ENCODE measurements at regions of chr9 and their contacts with region 1.

Region 1: DNA sequence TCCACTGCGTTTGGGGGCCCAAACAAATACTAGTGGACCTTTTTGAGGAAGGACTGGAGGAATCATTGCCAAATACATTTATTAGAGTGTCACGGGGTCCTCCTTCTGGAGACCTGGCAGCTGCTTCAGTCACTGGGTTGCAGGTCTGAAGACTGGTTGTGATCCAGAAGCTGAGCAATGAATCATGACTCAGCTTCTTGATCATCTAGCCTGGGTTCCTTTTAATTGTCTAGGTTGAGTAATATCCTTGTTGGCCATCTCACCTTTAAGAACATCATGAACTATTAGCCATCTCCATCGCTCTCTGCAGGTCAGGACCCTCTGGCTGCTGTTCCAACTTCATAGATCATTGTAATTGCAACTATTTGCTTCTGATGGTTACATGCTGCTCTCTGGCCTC is 15.4 kb upstream of the UBAP1 start:
- DNase-seq: no peak
- ATAC-seq: no peak
- H3K4me3 ChIP-seq: no peak overlapping the region
- H3K4me3 Mint-ChIP-seq: no peak overlapping the region
- H3K27ac ChIP-seq: no peak overlapping the region
- H3K27ac Mint-ChIP-seq: no peak overlapping the region
- H3K4me1 ChIP-seq: no peaks in the 10 kb centered on the region
- H3K4me1 Mint-ChIP-seq: no peaks in the 10 kb centered on the region
- H3K27me3 ChIP-seq: no peaks in the 10 kb centered on the region
- H3K27me3 Mint-ChIP-seq: no peaks in the 10 kb centered on the region

Region 2: GRCh38 chr9:34190996-34191892 is 27.8 kb after region 1 on chr9:
- CTCF ChIA-PET with region 1: no interaction called
- POLR2A ChIA-PET with region 1: interaction called in 1 of 2 experiments, 11 read pairs
- DNase-seq: peak in 1 of 35 experiments; percentile 21
- ATAC-seq: no peak
- H3K4me3 ChIP-seq: no peak overlapping the region
- H3K4me3 Mint-ChIP-seq: no peak overlapping the region
- H3K27ac ChIP-seq: no peak overlapping the region
- H3K27ac Mint-ChIP-seq: peak overlapping the region; percentile 61 to 76
- H3K4me1 ChIP-seq: peaks cover 16 to 31% of the 10 kb centered on the region in 2 experiments
- H3K4me1 Mint-ChIP-seq: peaks cover 54 to 68% (median 60%) of the 10 kb centered on the region in 3 donors
- H3K27me3 ChIP-seq: no peaks in the 10 kb centered on the region
- H3K27me3 Mint-ChIP-seq: no peaks in the 10 kb centered on the region

Region 3: DNA sequence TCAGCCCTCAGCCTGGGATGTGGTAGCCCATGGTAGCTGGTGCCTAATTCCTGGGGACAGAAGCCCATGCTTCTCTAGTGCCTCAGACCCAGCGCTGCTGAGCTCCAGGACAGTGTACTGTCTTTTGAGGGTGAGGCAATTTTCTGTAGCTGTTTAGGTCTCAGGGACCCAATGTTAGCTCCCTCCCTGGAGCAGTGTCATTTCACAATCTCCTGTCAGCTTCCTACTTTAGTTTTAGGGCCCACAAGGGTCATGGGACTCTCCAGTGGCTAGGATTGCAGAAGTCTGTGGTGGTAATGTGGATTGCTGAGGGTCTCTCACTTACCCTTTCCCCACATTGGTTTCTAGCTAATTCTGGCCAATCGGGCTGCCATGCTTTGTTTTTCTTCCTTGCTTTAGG is 614.2 kb after region 1 on chr9:
- CTCF ChIA-PET with region 1: no interaction called
- POLR2A ChIA-PET with region 1: no interaction called
- DNase-seq: no peak
- ATAC-seq: no peak
- H3K4me3 ChIP-seq: no peak overlapping the region
- H3K4me3 Mint-ChIP-seq: no peak overlapping the region
- H3K27ac ChIP-seq: no peak overlapping the region
- H3K27ac Mint-ChIP-seq: no peak overlapping the region
- H3K4me1 ChIP-seq: no peaks in the 10 kb centered on the region
- H3K4me1 Mint-ChIP-seq: no peaks in the 10 kb centered on the region
- H3K27me3 ChIP-seq: peaks cover 0 to 10% of the 10 kb centered on the region in 2 experiments
- H3K27me3 Mint-ChIP-seq: peaks cover 28 to 34% of the 10 kb centered on the region in 2 donors